PC-3 (cell line): ENCODE measurements at regions of chr1 and their contacts with region 1.

Region 1: DNA sequence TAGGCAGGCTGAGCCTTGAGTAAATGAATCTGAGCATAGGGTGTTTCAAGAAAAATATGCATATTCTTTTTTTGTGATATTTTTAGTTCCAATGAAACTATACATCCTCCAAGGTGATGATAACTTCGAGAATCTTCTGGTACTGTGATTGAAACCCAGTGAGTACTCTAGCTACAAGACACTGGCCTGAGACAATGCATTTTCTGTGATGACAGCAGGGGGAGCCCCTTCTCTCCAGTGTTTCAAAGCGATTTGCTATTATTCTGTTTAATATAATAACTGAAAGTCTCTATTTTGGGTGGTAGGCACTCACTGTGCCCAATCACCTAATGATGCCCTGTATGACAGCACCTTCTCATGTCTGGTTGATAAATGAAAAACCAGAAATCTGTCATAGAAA is 12.1 kb downstream of the IRF2BP2 start:
- DNase-seq: peak; percentile 58
- ATAC-seq: no peak
- H3K4me3 ChIP-seq: no peak overlapping the region
- H3K27ac ChIP-seq: no peak overlapping the region
- H3K4me1 ChIP-seq: peaks cover 39% of the 10 kb centered on the region
- H3K27me3 ChIP-seq: no peaks in the 10 kb centered on the region
- CTCF ChIP-seq: peak; percentile 72

Region 2: GRCh38 chr1:234499119-234499942 is 98.6 kb before region 1 on chr1:
- CTCF ChIA-PET with region 1: interaction called, 7 read pairs
- POLR2A ChIA-PET with region 1: no interaction called
- intact Hi-C with region 1: loop called (anchors 1 kb)
- DNase-seq: peak; percentile 82
- ATAC-seq: peak; percentile 72
- H3K4me3 ChIP-seq: peak overlapping the region; percentile 40; the same call in 1 of the 2 replicates
- H3K27ac ChIP-seq: peak overlapping the region; percentile 88
- H3K4me1 ChIP-seq: peaks cover 46% of the 10 kb centered on the region
- H3K27me3 ChIP-seq: no peaks in the 10 kb centered on the region
- CTCF ChIP-seq: peak; percentile 84